Cardiac septum (tissue), 1 donor: ENCODE measurements at regions of chr10 and their contacts with region 1.

Region 1: GRCh38 chr10:129971381-129972144 is 7.5 kb upstream of the EBF3 start:
- DNase-seq: no peak

Region 2: DNA sequence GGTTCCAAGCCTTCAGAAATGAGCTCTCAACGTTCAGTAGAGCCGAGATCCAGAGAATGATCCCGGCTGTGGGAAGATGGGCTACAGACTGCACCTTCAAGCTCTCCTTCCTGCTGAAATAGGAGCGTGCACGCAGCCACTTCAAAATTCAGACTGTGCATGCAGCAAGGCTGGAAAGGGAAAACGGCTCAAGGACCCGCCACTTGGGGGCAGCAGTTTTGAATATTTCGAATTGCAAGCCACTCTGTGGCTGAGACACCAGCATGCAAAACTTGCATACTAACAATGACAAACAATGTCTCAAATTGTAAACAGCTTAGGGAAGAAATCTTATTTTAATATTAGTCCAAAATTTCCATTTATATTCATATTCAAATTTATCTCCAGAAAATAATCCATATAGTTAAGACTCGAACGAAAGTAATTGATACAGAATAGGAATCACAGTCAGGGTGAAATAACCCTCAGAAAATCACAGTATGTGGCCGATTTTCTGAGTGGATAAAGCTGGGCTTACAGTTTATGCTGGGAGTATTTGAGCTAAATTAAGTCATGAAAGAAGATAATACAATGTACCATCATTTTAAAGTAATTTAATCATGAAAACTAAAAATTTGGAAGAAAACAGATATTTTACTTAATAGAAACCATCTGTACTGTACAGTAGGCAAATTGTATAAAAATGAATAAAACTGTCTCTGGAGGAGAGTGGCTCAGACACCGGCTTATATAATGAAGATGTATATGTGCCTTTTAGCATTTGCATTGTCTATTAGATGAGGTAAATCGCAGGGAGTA is 1707.5 kb before region 1 on chr10:
- intact Hi-C with region 1: loop called (anchors 10 kb)
- DNase-seq: no peak

Region 3: DNA sequence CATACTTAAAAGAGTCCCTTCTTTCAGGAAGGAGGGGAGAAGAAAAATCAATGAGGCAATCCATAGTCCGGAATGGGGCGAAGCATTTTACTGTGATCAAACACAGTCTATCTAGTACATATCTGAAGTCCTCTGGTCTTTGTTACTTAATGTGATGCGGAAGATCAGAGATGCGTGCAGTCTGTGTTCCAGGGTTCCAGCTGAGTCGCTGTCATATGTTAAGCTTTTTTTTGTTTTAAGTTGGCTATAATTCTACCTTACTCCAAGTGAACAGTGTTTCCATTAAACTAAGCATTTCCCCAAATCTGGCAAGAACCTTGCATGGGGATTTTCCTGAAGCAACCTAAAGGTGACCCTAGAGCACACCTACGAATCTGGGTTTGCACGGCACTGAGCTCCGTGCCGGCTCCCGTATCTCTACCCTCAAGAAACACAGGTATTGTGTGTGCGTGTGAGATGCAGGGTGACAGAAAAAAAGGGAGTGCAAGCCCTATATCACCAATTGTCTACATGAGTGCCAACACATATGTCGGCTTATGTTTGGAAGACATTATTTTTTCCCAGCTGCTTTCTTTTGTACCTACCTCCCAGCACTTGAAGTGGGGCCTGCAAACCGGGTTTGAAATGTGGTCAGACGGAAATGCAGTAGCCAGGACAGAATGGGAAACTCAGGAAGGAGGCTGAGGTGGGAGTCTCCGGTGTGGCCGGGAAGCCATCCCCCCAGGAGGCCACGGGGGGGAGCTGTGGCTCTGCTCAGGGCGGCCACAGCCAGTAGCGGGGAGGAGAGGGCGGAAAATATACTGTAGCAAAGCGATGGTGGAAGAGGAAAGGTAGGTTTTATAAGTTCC is 940.3 kb before region 1 on chr10:
- intact Hi-C with region 1: loop called (anchors 1 kb)
- DNase-seq: no peak

Region 4: GRCh38 chr10:129853562-129853903 is 118.0 kb before region 1 on chr10:
- intact Hi-C with region 1: loop called (anchors 5 kb)
- DNase-seq: no peak

Region 5: GRCh38 chr10:130110246-130111112 is 138.9 kb after region 1 on chr10 and contains the start of gene C10orf143:
- intact Hi-C with region 1: loop called (anchors 10 kb)
- DNase-seq: peak; percentile 99
- total RNA-seq, gene C10orf143: 2.6 TPM